ACHN (cell line): ENCODE measurements at regions of chr3 and their contacts with region 1.

Region 1: DNA sequence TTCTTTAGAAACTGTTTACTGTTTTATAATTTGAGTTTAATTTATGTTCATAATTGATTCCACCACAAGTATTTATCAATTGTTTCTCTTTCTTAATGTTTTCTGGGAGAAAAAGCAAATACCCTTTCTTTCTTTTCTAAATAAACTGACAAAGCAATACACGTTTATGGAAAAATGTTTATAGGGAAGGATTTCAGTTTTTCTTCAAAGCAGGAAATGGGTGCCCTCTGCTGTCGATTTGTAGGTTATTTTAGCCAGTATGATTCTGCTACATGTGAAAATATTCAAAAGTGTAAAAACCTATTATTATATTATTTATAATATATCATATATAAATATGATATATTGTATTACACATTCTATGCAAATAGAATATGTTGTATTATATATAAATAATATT is 921.0 kb upstream of the ROBO1 start:
- DNase-seq: peak; percentile 54

Region 2: GRCh38 chr3:79521238-79521848 is 1167.5 kb before region 1 on chr3:
- in situ Hi-C with region 1: loop called (anchors 25 kb)
- DNase-seq: peak; percentile 64

Region 3: GRCh38 chr3:80807577-80807976 is 118.8 kb after region 1 on chr3:
- in situ Hi-C with region 1: no loop called
- DNase-seq: no peak

Region 4: DNA sequence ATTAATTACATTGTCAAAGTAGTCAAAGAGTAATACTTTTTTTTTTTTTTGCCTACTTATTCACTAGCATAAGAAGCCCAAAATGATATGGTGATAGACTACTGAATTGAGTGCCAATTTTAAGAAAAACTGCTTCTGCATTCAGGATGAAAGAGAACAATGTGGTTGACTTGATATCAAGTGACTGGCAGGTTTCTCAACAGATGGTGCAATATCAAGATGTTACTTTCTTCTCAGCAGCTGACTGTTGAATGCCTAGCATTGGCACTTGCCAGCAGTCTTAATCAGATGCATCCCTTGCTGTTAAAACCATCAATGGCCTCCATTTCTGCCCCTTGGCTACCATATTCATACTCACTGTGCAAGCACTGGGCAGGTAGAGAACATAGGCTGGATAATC is 209.4 kb after region 1 on chr3:
- in situ Hi-C with region 1: no loop called
- DNase-seq: no peak